K562 (cell line): ENCODE measurements at regions of chr2 and their contacts with region 1.

Region 1: GRCh38 chr2:134411828-134412638 is 158.2 kb downstream of the MGAT5 start:
- DNase-seq: peak; percentile 15 to 66 (median 29)
- ATAC-seq: peak; percentile 95
- H3K4me3 ChIP-seq: no peak overlapping the region
- H3K27ac ChIP-seq: no peak overlapping the region
- H3K4me1 ChIP-seq: no peaks in the 10 kb centered on the region; a peak in 1 of 5 replicates
- H3K27me3 ChIP-seq: no peaks in the 10 kb centered on the region
- CTCF ChIP-seq: peak; percentile 64 to 72 (median 70)
- EP300 ChIP-seq: no peak
- POLR2A ChIP-seq: no peak
- RAD21 ChIP-seq: peak; percentile 60 to 74

Region 2: GRCh38 chr2:134207564-134208209 is 204.3 kb before region 1 on chr2:
- CTCF ChIA-PET with region 1: no interaction called
- POLR2A ChIA-PET with region 1: no interaction called
- in situ Hi-C with region 1: no loop called
- intact Hi-C with region 1: loop called (anchors 5 kb)
- DNase-seq: peak; percentile 49 to 66 (median 56)
- ATAC-seq: peak; percentile 99
- H3K4me3 ChIP-seq: no peak overlapping the region
- H3K27ac ChIP-seq: no peak overlapping the region
- H3K4me1 ChIP-seq: peaks cover 0 to 23% of the 10 kb centered on the region in 2 experiments; a peak in 3 of 5 replicates
- H3K27me3 ChIP-seq: no peaks in the 10 kb centered on the region
- CTCF ChIP-seq: peak; percentile 78 to 84 (median 80)
- EP300 ChIP-seq: no peak; the same call in 1 of the 2 replicates
- POLR2A ChIP-seq: no peak
- RAD21 ChIP-seq: peak; percentile 85 to 88

Region 3: GRCh38 chr2:134245340-134245984 is 166.6 kb before region 1 on chr2:
- CTCF ChIA-PET with region 1: no interaction called
- POLR2A ChIA-PET with region 1: no interaction called
- in situ Hi-C with region 1: no loop called
- intact Hi-C with region 1: loop called (anchors 5 kb)
- DNase-seq: peak; percentile 35 to 78 (median 39)
- ATAC-seq: peak; percentile 89
- H3K4me3 ChIP-seq: no peak overlapping the region
- H3K27ac ChIP-seq: no peak overlapping the region
- H3K4me1 ChIP-seq: peaks cover 4 to 8% of the 10 kb centered on the region in 2 experiments; a peak in 2 of 5 replicates
- H3K27me3 ChIP-seq: no peaks in the 10 kb centered on the region
- CTCF ChIP-seq: peak; percentile 66 to 81 (median 77)
- EP300 ChIP-seq: no peak
- POLR2A ChIP-seq: no peak
- RAD21 ChIP-seq: peak; percentile 75 to 77

Region 4: GRCh38 chr2:134348239-134348638 is 63.8 kb before region 1 on chr2:
- CTCF ChIA-PET with region 1: no interaction called
- POLR2A ChIA-PET with region 1: no interaction called
- in situ Hi-C with region 1: no loop called
- intact Hi-C with region 1: no loop called
- DNase-seq: no peak
- ATAC-seq: no peak
- H3K4me3 ChIP-seq: no peak overlapping the region
- H3K27ac ChIP-seq: no peak overlapping the region
- H3K4me1 ChIP-seq: no peaks in the 10 kb centered on the region
- H3K27me3 ChIP-seq: no peaks in the 10 kb centered on the region
- CTCF ChIP-seq: no peak
- EP300 ChIP-seq: no peak
- POLR2A ChIP-seq: no peak
- RAD21 ChIP-seq: no peak

Region 5: GRCh38 chr2:134359367-134360081 is 52.5 kb before region 1 on chr2:
- CTCF ChIA-PET with region 1: no interaction called
- POLR2A ChIA-PET with region 1: no interaction called
- in situ Hi-C with region 1: no loop called
- intact Hi-C with region 1: no loop called
- DNase-seq: no peak
- ATAC-seq: no peak
- H3K4me3 ChIP-seq: no peak overlapping the region
- H3K27ac ChIP-seq: no peak overlapping the region
- H3K4me1 ChIP-seq: no peaks in the 10 kb centered on the region
- H3K27me3 ChIP-seq: no peaks in the 10 kb centered on the region
- CTCF ChIP-seq: no peak
- EP300 ChIP-seq: no peak
- POLR2A ChIP-seq: no peak
- RAD21 ChIP-seq: no peak

Region 6: GRCh38 chr2:135378591-135378990 is 966.6 kb after region 1 on chr2:
- CTCF ChIA-PET with region 1: no interaction called
- POLR2A ChIA-PET with region 1: no interaction called
- in situ Hi-C with region 1: no loop called
- intact Hi-C with region 1: no loop called
- DNase-seq: no peak
- ATAC-seq: no peak
- H3K4me3 ChIP-seq: no peak overlapping the region
- H3K27ac ChIP-seq: no peak overlapping the region
- H3K4me1 ChIP-seq: no peaks in the 10 kb centered on the region; a peak in 1 of 5 replicates
- H3K27me3 ChIP-seq: no peaks in the 10 kb centered on the region
- CTCF ChIP-seq: no peak
- EP300 ChIP-seq: no peak
- POLR2A ChIP-seq: no peak
- RAD21 ChIP-seq: no peak